Mammary epithelial cell (primary cell): ENCODE measurements at regions of chr22 and their contacts with region 1.

Region 1: DNA sequence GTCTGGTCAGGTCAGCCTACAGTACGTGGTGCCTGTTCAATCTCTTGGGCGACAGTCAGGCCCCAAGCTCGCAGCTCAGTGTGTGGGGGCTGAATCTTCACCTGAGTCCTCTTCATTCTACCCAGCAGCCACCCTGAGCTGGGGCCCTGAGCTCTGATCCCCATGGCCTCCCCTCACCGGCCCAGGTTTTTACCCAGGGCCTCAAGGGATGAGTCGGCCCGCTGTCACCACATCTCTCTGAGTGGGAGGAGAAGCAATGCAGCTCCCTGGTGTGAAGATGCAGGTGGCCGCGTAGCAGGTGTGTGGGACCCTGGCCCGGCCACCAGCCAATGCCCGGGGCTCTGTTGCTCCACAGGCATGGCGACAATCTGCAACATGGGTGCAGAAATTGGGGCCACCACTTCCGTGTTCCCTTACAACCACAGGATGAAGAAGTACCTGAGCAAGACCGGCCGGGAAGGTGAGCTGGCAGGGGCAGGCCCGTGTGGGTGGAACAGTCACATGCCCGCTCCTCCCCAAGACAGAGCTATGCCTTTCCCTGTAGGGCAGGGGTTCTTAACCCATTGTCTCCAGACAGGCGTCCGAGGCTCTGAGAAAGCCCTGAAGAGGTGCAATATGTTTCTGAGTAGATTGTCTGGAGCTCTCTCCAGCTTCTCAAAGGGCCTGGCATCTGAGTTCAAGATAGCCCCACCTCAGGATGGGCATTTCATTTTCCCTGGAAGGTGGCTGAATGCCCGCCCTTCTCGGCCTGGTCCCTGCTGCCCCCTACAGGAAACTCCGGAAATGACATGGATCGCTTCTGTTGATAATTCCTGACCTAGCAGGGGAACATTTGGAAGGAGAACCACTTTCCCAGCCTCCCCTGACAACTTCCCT is 26.9 kb downstream of the POLR3H start:
- DNase-seq: peak; percentile 78
- H3K4me3 ChIP-seq: no peak overlapping the region
- H3K27ac ChIP-seq: peak overlapping the region; percentile 6
- H3K4me1 ChIP-seq: peaks cover 22% of the 10 kb centered on the region
- H3K27me3 ChIP-seq: no peaks in the 10 kb centered on the region
- CTCF ChIP-seq: peak; percentile 94 to 95

Region 2: GRCh38 chr22:40922484-40923303 is 594.7 kb before region 1 on chr22:
- CTCF ChIA-PET with region 1: interaction called, 3 read pairs
- dilution Hi-C with region 1: no loop called
- in situ Hi-C with region 1: no loop called
- intact Hi-C with region 1: loop called (anchors 5 kb)
- DNase-seq: peak; percentile 35
- H3K4me3 ChIP-seq: no peak overlapping the region
- H3K27ac ChIP-seq: no peak overlapping the region
- H3K4me1 ChIP-seq: no peaks in the 10 kb centered on the region
- H3K27me3 ChIP-seq: no peaks in the 10 kb centered on the region
- CTCF ChIP-seq: peak; percentile 50 to 57

Region 3: GRCh38 chr22:41285820-41286638 is 231.4 kb before region 1 on chr22 and contains the start of gene RANGAP1:
- CTCF ChIA-PET with region 1: no interaction called
- dilution Hi-C with region 1: no loop called
- in situ Hi-C with region 1: no loop called
- intact Hi-C with region 1: loop called (anchors 1 kb)
- DNase-seq: peak; percentile 99
- H3K4me3 ChIP-seq: peak within 1 kb of the TSS; percentile 79 to 90 (median 88)
- H3K27ac ChIP-seq: peak within 1 kb of the TSS; percentile 90
- H3K4me1 ChIP-seq: peaks cover 58% of the 10 kb centered on the region
- H3K27me3 ChIP-seq: no peaks in the 10 kb centered on the region
- CTCF ChIP-seq: peak in 1 of 2 donors; percentile 36
- total RNA-seq, gene RANGAP1: 47.8 to 127 TPM

Region 4: DNA sequence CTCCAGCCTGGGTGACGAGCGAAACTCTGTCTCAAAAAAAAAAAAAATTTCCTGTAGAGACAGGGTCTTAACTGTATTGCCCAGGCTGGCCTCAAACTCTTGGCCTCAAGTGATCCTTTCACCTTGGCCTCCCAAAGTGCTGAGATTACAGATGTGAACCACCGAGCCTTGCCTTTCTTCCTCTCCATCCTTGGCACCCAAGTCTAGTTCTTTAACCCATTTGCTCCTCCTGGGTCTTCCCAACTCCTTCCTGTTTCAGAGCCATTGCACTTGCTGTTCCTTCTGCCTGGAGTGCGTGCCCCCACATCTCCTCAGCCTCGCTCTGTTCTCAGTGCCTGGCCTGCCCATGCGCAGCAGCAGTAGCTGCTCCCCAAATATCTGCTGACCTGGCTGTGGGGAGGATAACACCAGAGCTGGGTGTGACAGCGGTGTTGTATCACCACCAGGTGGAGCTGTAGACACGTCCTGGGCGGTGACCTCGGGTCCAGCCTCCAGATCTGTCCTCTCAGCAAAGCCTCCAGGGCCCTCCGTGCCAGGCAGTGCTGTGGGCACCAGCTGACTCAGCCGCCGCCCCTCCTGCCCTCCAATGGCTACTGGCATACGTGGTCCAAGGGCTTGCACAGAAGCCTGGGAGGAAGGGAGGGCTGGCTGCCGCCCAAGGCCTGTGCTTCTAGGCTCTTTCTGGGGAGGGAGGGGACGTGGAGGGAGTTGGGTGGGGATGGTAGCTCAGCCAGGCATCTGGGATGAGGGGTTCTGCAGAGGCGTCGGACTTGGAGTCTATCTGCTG is 113.7 kb before region 1 on chr22:
- CTCF ChIA-PET with region 1: interaction called, 14 read pairs
- dilution Hi-C with region 1: no loop called
- in situ Hi-C with region 1: loop called (anchors 5 kb)
- intact Hi-C with region 1: loop called (anchors 1 kb)
- DNase-seq: peak; percentile 81
- H3K4me3 ChIP-seq: no peak overlapping the region
- H3K27ac ChIP-seq: no peak overlapping the region
- H3K4me1 ChIP-seq: peaks cover 5% of the 10 kb centered on the region
- H3K27me3 ChIP-seq: no peaks in the 10 kb centered on the region
- CTCF ChIP-seq: peak; percentile 94 to 96

Region 5: DNA sequence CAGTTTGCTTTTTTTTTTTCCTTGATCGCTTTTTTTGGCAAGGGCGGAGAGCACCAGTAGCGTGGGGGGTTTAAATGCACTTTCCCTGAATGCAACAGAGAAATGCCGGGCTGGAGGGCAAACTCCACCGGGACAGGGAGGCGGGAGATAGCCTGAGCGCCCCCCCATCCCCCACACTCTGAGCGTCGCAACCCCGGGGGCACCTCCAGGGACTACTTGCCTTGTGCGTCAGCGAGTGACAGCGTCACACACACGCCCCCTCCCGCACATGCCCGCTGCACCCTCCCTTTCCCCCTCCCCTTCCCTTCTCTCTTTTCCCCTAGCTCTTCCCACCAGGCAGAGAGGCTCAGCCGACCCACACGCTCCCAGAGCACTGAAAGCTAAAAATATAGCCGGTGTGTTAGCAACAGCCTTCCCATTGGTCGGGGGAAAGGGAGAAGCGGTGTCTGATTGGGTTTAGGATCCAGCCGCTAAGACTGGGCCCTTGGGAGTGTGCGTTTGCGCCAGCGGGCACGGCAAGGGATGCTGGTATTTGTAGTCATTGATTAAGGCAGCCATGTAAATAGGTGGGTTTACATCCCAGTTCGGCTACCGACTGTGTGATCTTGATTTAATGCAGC is 69.1 kb before region 1 on chr22:
- CTCF ChIA-PET with region 1: interaction called, 5 read pairs
- dilution Hi-C with region 1: no loop called
- in situ Hi-C with region 1: no loop called
- intact Hi-C with region 1: loop called (anchors 1 kb)
- DNase-seq: peak; percentile 99
- H3K4me3 ChIP-seq: peak overlapping the region; percentile 76 to 86 (median 81)
- H3K27ac ChIP-seq: peak overlapping the region; percentile 82
- H3K4me1 ChIP-seq: peaks cover 4% of the 10 kb centered on the region
- H3K27me3 ChIP-seq: no peaks in the 10 kb centered on the region
- CTCF ChIP-seq: no peak

Region 6: DNA sequence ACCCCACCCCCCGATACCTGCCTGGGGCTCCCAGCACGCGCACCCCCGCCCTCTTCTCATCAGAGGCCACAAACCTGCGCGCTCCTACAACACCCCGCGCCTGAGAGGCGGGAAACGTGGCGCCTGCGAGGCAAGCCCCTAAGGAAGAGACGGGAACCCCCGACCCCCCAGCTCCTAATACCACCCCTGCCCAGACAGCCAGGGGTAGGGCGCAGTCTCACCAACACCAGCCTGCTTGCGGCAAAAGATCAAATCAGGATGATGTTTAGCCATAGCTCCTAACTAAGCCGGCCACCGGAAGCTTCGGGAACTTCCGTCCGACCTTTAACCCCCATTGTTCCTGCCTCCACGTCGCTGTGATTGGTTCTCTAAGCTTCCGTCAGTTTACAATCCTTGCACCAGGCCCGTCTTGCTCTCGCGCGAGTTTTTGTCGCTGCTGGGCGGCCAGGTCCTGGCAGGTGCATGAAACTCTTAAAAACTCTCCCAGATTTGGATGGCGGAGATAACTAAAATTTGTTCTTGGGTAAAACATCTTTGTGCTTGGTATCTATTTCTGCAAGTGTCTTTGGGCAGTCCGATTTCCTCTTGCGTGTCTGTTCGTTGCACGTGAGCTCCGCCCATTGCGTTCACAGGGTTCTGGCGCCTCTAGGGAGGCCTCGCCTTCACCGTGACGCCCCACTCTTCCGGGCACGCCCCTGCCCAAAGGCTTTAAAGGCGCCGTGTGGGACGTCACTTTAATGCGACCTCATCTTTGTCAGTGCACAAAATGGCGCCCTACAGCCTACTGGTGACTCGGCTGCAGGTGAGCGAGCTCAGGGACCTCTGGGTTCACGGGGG is 48.8 kb before region 1 on chr22 and contains the starts of genes ACO2 and PHF5A:
- CTCF ChIA-PET with region 1: interaction called, 6 read pairs
- dilution Hi-C with region 1: loop called (anchors 5 kb)
- in situ Hi-C with region 1: no loop called
- intact Hi-C with region 1: loop called (anchors 5 kb)
- DNase-seq: peak; percentile 98
- H3K4me3 ChIP-seq: peak within 1 kb of the TSS; percentile 68 to 82 (median 81)
- H3K27ac ChIP-seq: peak within 1 kb of the TSS; percentile 98
- H3K4me1 ChIP-seq: peaks cover 17% of the 10 kb centered on the region
- H3K27me3 ChIP-seq: no peaks in the 10 kb centered on the region
- CTCF ChIP-seq: no peak
- total RNA-seq, gene ACO2: 79.2 to 96.0 TPM
- total RNA-seq, gene PHF5A: 32.2 to 54.3 TPM

Region 7: DNA sequence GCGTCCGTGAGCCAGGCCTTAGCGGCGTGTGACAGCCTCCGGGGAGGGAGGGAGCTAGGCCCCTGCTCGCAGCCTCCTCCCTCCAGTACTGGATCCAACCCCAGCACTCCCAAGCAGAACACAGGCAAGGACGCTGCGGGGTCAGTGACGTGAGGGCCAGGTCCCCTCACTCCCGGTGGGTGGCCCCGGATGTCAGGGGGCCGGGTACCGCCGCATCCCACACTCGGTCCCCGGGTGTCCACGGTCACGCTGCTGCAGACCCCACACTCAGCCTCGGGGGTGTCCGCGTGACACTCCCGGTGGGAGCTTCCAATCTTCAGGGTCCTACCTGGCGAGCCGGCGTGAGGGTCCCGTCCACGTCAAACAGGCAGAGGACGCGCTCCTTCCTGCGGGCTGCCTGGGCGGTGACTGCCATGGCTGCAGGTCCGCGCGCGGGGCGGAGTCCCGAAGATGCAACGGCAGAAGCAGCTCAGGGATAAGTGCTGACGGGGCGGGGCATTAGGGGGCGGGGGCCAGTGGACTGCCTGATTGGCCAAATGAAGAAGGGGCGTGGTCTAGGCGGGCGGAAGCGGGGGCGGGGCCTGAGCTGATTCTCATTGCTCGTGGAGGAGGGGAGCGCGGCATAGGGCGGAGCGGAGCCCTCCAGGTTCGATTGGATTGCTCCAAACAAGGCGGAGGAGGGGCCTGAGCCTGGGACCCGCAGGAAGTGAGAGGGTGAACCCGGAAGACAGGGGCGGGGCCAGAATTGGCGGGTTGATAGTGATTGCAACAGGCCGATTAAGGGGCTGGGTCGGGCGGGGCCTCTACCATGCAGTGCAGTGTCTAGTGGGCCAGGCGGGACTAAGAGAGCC is 72.2 kb after region 1 on chr22 and contains the start of gene PMM1:
- CTCF ChIA-PET with region 1: no interaction called
- dilution Hi-C with region 1: loop called (anchors 5 kb)
- in situ Hi-C with region 1: no loop called
- intact Hi-C with region 1: no loop called
- DNase-seq: peak; percentile 99
- H3K4me3 ChIP-seq: peak within 1 kb of the TSS; percentile 63 to 96 (median 78)
- H3K27ac ChIP-seq: peak within 1 kb of the TSS; percentile 60
- H3K4me1 ChIP-seq: peaks cover 10% of the 10 kb centered on the region
- H3K27me3 ChIP-seq: no peaks in the 10 kb centered on the region
- CTCF ChIP-seq: no peak
- total RNA-seq, gene PMM1: 21.2 to 44.8 TPM

Region 8: GRCh38 chr22:41656556-41656955 is 139.1 kb after region 1 on chr22:
- CTCF ChIA-PET with region 1: no interaction called
- dilution Hi-C with region 1: no loop called
- in situ Hi-C with region 1: no loop called
- intact Hi-C with region 1: no loop called
- DNase-seq: no peak
- H3K4me3 ChIP-seq: no peak overlapping the region
- H3K27ac ChIP-seq: no peak overlapping the region
- H3K4me1 ChIP-seq: no peaks in the 10 kb centered on the region
- H3K27me3 ChIP-seq: no peaks in the 10 kb centered on the region
- CTCF ChIP-seq: no peak